ENCODE measurements at regions of chr11 and their contacts with region 1.

Region 1: DNA sequence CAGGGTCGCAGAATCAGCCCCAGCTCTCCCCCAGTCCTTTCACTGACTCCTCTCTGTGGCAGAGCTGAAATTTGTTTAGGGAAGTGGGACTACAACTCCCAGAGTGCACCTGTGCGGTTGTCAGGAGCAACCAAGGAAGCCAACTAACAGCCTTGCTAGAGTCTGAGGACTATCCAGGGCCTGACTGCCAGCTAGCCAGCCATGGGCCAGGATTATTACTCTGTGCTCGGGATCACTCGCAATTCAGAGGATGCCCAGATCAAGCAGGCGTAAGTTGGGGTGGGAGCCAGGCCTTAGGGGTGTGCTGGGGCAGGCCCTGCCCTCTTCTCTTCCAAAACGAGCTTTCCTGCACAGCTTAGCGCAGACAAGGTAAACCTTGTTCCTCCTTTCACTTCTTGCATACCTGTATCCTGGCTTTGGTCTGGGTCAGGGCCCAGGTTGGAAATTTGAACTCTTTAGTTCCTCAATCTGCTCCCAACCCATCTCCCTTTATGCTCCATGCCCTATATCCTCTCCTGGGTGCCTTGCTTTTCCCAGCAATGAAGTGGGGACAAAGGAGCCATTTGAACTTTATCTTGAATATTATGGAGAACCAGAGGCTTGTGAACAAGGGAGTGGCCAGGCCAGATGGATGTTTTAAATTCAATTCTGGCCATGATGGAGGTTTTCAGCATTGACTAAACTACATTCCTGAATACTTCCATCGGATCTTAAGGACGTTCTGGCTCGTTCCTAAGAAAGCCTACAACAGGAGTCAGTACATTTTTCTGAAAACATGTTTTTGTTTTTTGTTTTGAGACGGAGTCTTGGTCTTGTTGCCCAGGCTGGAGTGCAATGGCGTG is at the start of gene DNAJB13:
- DNase-seq: peak; percentile 77
- ATAC-seq: peak; percentile 91
- H3K4me3 ChIP-seq: peak within 1 kb of the TSS; percentile 46 to 77 (median 71)
- H3K27ac ChIP-seq: peak within 1 kb of the TSS; percentile 86
- H3K4me1 ChIP-seq: peaks cover 67% of the 10 kb centered on the region
- H3K27me3 ChIP-seq: no peaks in the 10 kb centered on the region; a peak in 1 of 5 replicates
- CTCF ChIP-seq: no peak
- EP300 ChIP-seq: no peak
- POLR2A ChIP-seq: peak in 1 of 2 experiments; percentile 69; a peak in 2 of 4 replicates
- RAD21 ChIP-seq: no peak
- total RNA-seq, gene DNAJB13: not detected in 2 replicates

Region 2: DNA sequence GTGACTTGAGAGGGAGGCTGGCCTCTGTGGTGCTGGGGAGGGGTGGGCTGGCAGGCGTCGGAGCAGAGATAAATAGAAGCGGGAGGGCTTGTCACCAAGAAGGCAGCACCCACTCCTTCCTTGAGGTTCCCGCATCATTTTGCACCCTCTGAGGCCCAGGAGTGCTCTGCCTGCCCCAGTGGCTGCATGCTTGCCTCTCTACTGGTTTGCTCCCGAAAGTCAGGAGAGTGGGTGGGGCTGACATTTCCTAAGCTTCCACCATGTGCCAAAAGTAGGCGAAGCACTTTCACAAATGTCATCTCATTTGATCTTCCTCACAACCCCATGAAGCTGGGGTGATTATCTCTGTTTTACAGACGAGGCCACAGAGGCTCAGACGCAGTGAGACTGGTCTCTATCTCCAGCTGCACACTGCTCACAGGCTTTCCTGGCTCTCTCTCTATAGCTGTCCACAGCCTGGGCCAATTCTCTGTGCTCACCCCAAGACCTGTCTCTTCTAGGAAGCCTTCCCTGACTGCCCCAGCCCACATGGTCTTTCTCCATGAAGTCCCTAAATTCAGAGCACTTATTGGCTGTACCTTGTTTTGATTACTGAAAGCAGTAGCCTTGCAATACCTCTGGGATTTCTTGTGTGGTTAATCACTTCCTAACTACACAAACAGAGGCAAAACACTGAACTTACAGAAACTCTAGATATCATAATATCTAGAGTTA is 60.4 kb after region 1 on chr11:
- CTCF ChIA-PET with region 1: no interaction called
- POLR2A ChIA-PET with region 1: no interaction called
- in situ Hi-C with region 1: no loop called
- intact Hi-C with region 1: no loop called
- DNase-seq: no peak
- ATAC-seq: no peak
- H3K4me3 ChIP-seq: no peak overlapping the region
- H3K27ac ChIP-seq: no peak overlapping the region
- H3K4me1 ChIP-seq: peaks cover 27% of the 10 kb centered on the region
- H3K27me3 ChIP-seq: no peaks in the 10 kb centered on the region
- CTCF ChIP-seq: no peak
- EP300 ChIP-seq: no peak
- POLR2A ChIP-seq: no peak
- RAD21 ChIP-seq: no peak

Region 3: GRCh38 chr11:74037309-74037708 is 86.2 kb after region 1 on chr11:
- CTCF ChIA-PET with region 1: no interaction called
- POLR2A ChIA-PET with region 1: no interaction called
- in situ Hi-C with region 1: no loop called
- intact Hi-C with region 1: no loop called
- DNase-seq: no peak
- ATAC-seq: no peak
- H3K4me3 ChIP-seq: no peak overlapping the region
- H3K27ac ChIP-seq: no peak overlapping the region
- H3K4me1 ChIP-seq: peaks cover 19% of the 10 kb centered on the region
- H3K27me3 ChIP-seq: no peaks in the 10 kb centered on the region
- CTCF ChIP-seq: no peak
- EP300 ChIP-seq: no peak
- POLR2A ChIP-seq: no peak
- RAD21 ChIP-seq: no peak

Region 4: GRCh38 chr11:74170694-74171629 is 219.9 kb after region 1 on chr11 and contains the starts of genes C2CD3 and PPME1:
- CTCF ChIA-PET with region 1: no interaction called
- POLR2A ChIA-PET with region 1: interaction called, 3 read pairs
- in situ Hi-C with region 1: loop called (anchors 25 kb)
- intact Hi-C with region 1: no loop called
- DNase-seq: peak; percentile 99
- ATAC-seq: peak; percentile 96
- H3K4me3 ChIP-seq: peak within 1 kb of the TSS; percentile 81 to 86 (median 82)
- H3K27ac ChIP-seq: peak within 1 kb of the TSS; percentile 75
- H3K4me1 ChIP-seq: peaks cover 49% of the 10 kb centered on the region
- H3K27me3 ChIP-seq: no peaks in the 10 kb centered on the region; a peak in 1 of 5 replicates
- CTCF ChIP-seq: peak; percentile 67
- EP300 ChIP-seq: peak in 1 of 2 experiments; percentile 19; a peak in 1 of 4 replicates
- POLR2A ChIP-seq: peak; percentile 88 to 98
- RAD21 ChIP-seq: no peak
- total RNA-seq, gene C2CD3: 6.4 and 8.0 TPM in 2 replicates
- total RNA-seq, gene PPME1: 31.3 TPM in 2 replicates